ENCODE measurements at regions of chr11 and their contacts with region 1.

Region 1: GRCh38 chr11:61446211-61446651 is 16.3 kb downstream of the SDHAF2 start:
- DNase-seq: peak; percentile 88
- H3K4me3 Mint-ChIP-seq: no peak overlapping the region
- H3K27ac Mint-ChIP-seq: no peak overlapping the region
- H3K4me1 Mint-ChIP-seq: no peaks in the 10 kb centered on the region
- H3K27me3 Mint-ChIP-seq: no peaks in the 10 kb centered on the region
- CTCF ChIP-seq: peak; percentile 89

Region 2: DNA sequence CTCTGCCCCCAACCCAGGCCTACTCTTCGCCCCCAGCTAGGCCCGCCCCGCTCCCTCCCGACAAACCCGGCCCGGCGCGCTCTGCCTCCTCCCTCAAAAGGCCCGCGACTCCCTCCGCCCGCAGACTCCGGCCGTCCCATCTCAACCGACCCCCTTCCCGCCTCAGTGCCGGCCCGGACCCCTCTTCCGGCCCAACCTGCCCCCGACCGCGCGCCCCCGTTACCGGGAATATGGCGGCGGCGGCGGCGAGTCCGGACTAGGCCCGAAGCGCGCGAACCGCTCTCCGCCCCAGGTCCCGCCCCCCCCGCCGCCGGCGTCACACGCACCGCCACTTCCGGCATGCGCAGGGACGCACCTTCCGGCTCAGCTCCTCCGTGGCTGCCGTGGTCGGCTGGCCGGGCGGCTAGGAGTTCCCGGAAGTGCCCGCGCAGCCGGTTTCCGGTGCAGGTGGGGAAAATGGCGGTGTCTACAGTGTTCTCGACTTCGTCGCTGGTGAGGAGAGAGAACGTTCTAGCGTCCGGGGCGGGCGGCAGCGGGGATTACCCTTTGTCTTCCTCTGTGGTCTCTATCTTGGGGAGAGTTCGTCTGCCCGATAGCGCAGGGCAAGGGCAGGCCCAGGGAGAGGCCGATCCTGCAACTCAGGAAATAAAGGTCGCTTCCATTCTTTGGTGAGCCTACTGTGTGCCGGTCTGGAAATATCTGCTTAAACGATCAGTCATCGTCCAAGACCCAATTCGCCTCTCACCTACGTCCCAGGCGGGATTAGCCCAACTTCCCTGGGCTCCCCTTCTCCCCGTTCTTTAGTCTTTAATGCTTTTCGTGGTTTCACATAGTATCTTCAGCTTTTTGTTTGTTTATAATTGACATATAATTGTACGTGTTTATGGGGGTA is 16.3 kb before region 1 on chr11 and contains the starts of genes CPSF7 and SDHAF2:
- CTCF ChIA-PET with region 1: interaction called, 16 read pairs
- intact Hi-C with region 1: no loop called
- DNase-seq: peak; percentile 98
- H3K4me3 Mint-ChIP-seq: peak within 1 kb of the TSS; percentile 93
- H3K27ac Mint-ChIP-seq: peak within 1 kb of the TSS; percentile 98
- H3K4me1 Mint-ChIP-seq: no peaks in the 10 kb centered on the region
- H3K27me3 Mint-ChIP-seq: no peaks in the 10 kb centered on the region
- CTCF ChIP-seq: no peak
- total RNA-seq, gene CPSF7: 86.6 and 96.3 TPM in 2 replicates
- total RNA-seq, gene SDHAF2: 41.9 and 42.1 TPM in 2 replicates

Region 3: DNA sequence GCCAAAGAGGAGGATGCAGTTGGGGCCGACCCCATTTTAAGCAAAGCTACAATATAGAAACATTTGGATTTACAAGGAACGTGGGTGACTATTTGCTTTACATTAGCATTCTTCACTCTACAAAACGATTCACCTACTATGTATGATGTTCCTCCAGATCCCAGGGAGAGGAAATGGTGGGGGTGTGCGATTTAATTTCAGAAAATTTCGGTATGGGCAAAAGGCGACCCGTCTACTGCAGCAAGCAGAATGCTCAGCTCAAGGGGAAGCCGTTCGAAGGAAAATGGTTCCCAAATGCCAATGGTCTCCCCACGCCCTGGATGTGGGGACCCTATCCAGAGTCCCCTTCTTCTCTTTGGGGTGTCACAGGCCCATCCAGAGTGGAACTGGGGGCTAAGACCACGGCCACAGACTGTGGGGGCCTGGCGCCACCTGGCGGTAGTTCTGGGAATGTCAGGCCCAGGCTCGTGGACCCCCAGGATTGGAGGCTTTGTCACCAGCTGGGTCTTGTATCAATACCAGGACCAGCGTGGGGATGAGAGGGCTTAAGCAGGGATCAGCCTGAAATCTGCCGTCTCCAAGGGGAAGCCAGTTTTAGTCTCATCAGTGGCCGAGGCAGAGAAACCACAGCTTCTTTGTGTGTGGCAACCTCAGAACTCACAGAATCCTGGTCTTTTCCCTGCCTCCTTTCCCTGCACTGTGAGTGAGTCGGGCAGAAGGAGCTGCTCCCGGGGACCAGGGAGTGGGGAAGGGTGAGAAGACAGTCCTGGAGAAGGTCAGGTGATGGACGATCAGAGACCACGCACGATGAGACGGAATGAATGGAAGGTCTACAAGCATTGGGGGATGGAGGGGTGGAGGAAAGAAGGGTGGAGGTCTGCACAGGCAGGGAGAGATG is 70.7 kb after region 1 on chr11:
- CTCF ChIA-PET with region 1: interaction called, 16 read pairs
- intact Hi-C with region 1: no loop called
- DNase-seq: peak; percentile 57
- H3K4me3 Mint-ChIP-seq: no peak overlapping the region
- H3K27ac Mint-ChIP-seq: no peak overlapping the region
- H3K4me1 Mint-ChIP-seq: peaks cover 21% of the 10 kb centered on the region
- H3K27me3 Mint-ChIP-seq: peaks cover 39% of the 10 kb centered on the region
- CTCF ChIP-seq: peak; percentile 98

Region 4: DNA sequence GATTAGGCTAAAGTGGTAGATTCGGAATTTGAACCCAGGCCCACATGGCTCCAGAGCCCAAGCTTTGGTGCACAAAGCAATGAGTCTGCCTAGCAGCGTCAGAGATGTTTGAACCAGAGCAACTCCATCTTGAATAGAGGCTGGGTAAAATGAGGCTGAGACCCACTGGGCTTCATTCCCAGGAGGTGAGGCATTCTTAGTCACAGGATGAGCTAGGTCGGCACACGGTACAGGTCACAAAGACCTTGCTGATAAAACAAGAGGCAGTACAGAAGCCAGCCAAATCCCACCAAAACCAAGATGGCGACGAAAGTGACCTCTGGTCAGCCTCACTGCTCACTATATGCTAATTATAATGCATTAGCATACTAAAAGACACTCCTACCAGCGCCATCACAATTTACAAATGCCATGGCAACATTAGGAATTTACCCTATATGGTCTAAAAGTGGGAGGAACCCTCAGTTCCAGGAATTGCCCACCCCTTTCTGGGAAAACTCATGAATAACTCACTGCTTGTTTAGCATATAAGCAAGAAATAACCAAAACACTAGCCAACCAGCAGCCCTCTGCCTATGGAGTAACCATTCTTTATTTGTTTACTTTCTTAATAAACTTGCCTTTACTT is 193.7 kb after region 1 on chr11:
- CTCF ChIA-PET with region 1: interaction called, 23 read pairs
- intact Hi-C with region 1: loop called (anchors 1 kb)
- DNase-seq: no peak
- H3K4me3 Mint-ChIP-seq: no peak overlapping the region
- H3K27ac Mint-ChIP-seq: no peak overlapping the region
- H3K4me1 Mint-ChIP-seq: no peaks in the 10 kb centered on the region
- H3K27me3 Mint-ChIP-seq: peaks cover 35% of the 10 kb centered on the region
- CTCF ChIP-seq: no peak